AG04450 (cell line): ENCODE measurements at regions of chr4 and their contacts with region 1.

Region 1: GRCh38 chr4:74133786-74134499 is 24.0 kb upstream of the MTHFD2L start:
- DNase-seq: peak; percentile 65
- H3K4me3 ChIP-seq: no peak overlapping the region
- H3K27ac ChIP-seq: no peak overlapping the region
- H3K27me3 ChIP-seq: no peaks in the 10 kb centered on the region
- CTCF ChIP-seq: peak; percentile 92

Region 2: DNA sequence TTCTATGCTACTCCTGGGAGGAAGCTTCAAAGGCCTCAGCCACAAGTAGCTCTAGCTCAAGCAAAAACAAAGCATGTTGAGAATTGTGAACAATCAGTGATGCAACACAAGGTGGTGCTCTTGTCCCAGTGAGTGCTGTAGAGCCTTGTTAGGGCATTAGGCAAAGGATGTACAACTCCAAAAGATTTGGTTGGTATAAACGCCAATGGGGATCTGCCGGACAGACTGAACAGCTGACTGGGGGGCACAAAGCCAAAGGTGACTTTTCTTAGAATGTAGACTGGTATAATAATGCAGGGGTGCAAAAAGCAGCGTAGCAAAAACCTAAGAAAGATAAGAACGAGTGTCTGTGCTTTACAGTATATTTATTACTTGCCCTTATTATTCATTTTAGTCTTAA is 792.5 kb before region 1 on chr4:
- CTCF ChIA-PET with region 1: interaction called, 10 read pairs
- POLR2A ChIA-PET with region 1: no interaction called
- DNase-seq: peak; percentile 4
- H3K4me3 ChIP-seq: no peak overlapping the region
- H3K27ac ChIP-seq: no peak overlapping the region
- H3K27me3 ChIP-seq: no peaks in the 10 kb centered on the region
- CTCF ChIP-seq: peak; percentile 61

Region 3: DNA sequence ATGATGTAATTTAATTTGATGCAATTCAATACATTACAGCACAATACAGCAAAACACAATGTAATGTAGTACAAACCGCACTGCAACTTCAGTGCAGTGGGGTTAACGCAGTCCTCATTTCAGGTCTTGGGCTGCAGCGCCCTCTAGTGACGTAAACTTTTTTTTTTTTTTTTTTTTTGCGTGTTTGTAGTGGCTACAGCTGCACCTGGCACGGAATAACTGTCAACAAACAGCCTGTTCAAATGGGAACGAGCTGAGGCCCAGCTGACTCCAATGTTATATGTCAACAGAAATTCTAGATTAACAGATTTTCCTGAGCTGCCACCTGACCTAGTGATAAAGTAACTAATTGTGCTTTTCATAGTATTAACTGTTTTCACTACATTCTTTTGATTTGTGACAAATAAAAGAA is 480.2 kb before region 1 on chr4:
- CTCF ChIA-PET with region 1: interaction called, 92 read pairs
- POLR2A ChIA-PET with region 1: no interaction called
- DNase-seq: peak; percentile 24
- H3K4me3 ChIP-seq: no peak overlapping the region
- H3K27ac ChIP-seq: no peak overlapping the region
- H3K27me3 ChIP-seq: no peaks in the 10 kb centered on the region
- CTCF ChIP-seq: peak; percentile 65

Region 4: GRCh38 chr4:73683033-73683432 is 450.9 kb before region 1 on chr4:
- CTCF ChIA-PET with region 1: no interaction called
- POLR2A ChIA-PET with region 1: no interaction called
- DNase-seq: no peak
- H3K4me3 ChIP-seq: no peak overlapping the region
- H3K27ac ChIP-seq: no peak overlapping the region
- H3K27me3 ChIP-seq: no peaks in the 10 kb centered on the region
- CTCF ChIP-seq: no peak

Region 5: GRCh38 chr4:73729534-73730165 is 404.3 kb before region 1 on chr4:
- CTCF ChIA-PET with region 1: interaction called, 25 read pairs
- POLR2A ChIA-PET with region 1: no interaction called
- DNase-seq: peak; percentile 70
- H3K4me3 ChIP-seq: no peak overlapping the region
- H3K27ac ChIP-seq: no peak overlapping the region
- H3K27me3 ChIP-seq: no peaks in the 10 kb centered on the region
- CTCF ChIP-seq: peak; percentile 94

Region 6: GRCh38 chr4:74085669-74086068 is 48.3 kb before region 1 on chr4:
- CTCF ChIA-PET with region 1: no interaction called
- POLR2A ChIA-PET with region 1: no interaction called
- DNase-seq: no peak
- H3K4me3 ChIP-seq: no peak overlapping the region
- H3K27ac ChIP-seq: no peak overlapping the region
- H3K27me3 ChIP-seq: peaks cover 3% of the 10 kb centered on the region
- CTCF ChIP-seq: no peak

Region 7: DNA sequence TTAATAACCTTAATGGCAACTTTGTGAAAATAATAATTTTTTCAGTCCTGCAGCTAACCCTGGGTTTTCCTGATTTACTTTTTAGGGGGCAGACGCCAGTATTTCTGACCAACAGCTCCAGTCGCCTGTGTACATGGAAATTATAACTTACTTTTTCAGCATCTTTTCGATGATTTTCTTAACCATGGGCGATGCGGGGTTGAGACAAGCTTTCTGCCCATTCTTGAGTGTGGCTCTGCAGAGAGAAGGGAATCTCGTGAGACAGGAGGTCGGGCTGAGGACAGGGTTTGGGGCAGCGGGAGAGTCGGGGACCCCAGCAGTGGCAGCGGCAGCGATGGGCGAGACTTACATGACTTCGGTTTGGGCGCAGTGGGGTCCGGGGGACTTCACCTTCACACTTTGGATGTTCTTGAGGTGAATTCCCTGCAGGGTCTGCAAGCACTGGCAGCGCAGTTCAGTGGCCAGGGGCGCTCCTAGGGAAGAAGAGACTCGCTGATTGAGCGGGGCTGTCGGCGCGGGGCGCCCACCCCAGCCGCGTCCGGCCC is 35.4 kb before region 1 on chr4:
- CTCF ChIA-PET with region 1: interaction called, 15 read pairs
- POLR2A ChIA-PET with region 1: no interaction called
- DNase-seq: no peak
- H3K4me3 ChIP-seq: peak overlapping the region; percentile 71
- H3K27ac ChIP-seq: no peak overlapping the region
- H3K27me3 ChIP-seq: no peaks in the 10 kb centered on the region
- CTCF ChIP-seq: no peak

Region 8: GRCh38 chr4:74146581-74147129 is 12.7 kb after region 1 on chr4:
- CTCF ChIA-PET with region 1: interaction called, 21 read pairs
- POLR2A ChIA-PET with region 1: no interaction called
- DNase-seq: no peak
- H3K4me3 ChIP-seq: no peak overlapping the region
- H3K27ac ChIP-seq: no peak overlapping the region
- H3K27me3 ChIP-seq: no peaks in the 10 kb centered on the region
- CTCF ChIP-seq: no peak

Region 9: GRCh38 chr4:74456056-74456744 is 322.3 kb after region 1 on chr4:
- CTCF ChIA-PET with region 1: no interaction called
- POLR2A ChIA-PET with region 1: no interaction called
- DNase-seq: no peak
- H3K4me3 ChIP-seq: no peak overlapping the region
- H3K27ac ChIP-seq: no peak overlapping the region
- H3K27me3 ChIP-seq: no peaks in the 10 kb centered on the region
- CTCF ChIP-seq: no peak